Prostate gland (tissue), 2 donors: ENCODE measurements at regions of chr11 and their contacts with region 1.

Region 1: GRCh38 chr11:36564376-36565030 is 3.3 kb upstream of the RAG1 start:
- DNase-seq: peak; percentile 50
- H3K4me3 ChIP-seq: peak overlapping the region in 1 of 2 donors; percentile 11
- H3K27ac ChIP-seq: no peak overlapping the region
- H3K4me1 ChIP-seq: no peaks in the 10 kb centered on the region
- H3K27me3 ChIP-seq: no peaks in the 10 kb centered on the region
- CTCF ChIP-seq: peak; percentile 32 to 71 (median 65)
- POLR2A ChIP-seq: no peak

Region 2: GRCh38 chr11:36622431-36623136 is 58.1 kb after region 1 on chr11:
- intact Hi-C with region 1: loop called (anchors 5 kb)
- DNase-seq: no peak
- H3K4me3 ChIP-seq: no peak overlapping the region
- H3K27ac ChIP-seq: no peak overlapping the region
- H3K4me1 ChIP-seq: no peaks in the 10 kb centered on the region
- H3K27me3 ChIP-seq: no peaks in the 10 kb centered on the region
- CTCF ChIP-seq: peak in 3 of 4 experiments; percentile 20 to 39 (median 37)
- POLR2A ChIP-seq: no peak

Region 3: GRCh38 chr11:36672813-36673450 is 108.4 kb after region 1 on chr11:
- intact Hi-C with region 1: loop called (anchors 5 kb)
- DNase-seq: peak; percentile 32
- H3K4me3 ChIP-seq: no peak overlapping the region
- H3K27ac ChIP-seq: no peak overlapping the region
- H3K4me1 ChIP-seq: no peaks in the 10 kb centered on the region
- H3K27me3 ChIP-seq: no peaks in the 10 kb centered on the region
- CTCF ChIP-seq: peak; percentile 68 to 94 (median 82)
- POLR2A ChIP-seq: no peak